Right ventricle myocardium superior (tissue), 1 donor: ENCODE measurements at regions of chr12 and their contacts with region 1.

Region 1: DNA sequence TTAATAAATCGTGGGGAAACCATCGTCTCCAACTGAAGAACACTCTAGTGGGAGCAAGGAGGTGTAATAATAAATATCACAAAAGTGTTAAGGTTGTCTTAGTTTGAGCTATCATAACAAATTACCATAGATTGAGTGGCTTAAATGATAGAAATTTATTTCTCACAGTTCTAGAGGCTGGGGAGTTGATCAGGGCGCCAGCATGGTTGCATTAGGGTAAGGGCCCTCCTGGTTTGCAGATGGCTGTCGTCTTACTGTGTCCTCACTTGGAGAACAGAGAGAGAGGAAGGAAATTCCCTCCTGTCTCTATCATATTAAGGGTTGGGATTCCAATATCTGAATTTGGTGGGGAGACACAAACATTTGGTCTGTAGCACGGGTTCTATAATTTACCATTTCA is 33.0 kb downstream of the MRPS35 start:
- DNase-seq: no peak
- ATAC-seq: no peak

Region 2: GRCh38 chr12:27821259-27821973 is 77.8 kb after region 1 on chr12:
- intact Hi-C with region 1: loop called (anchors 5 kb)
- DNase-seq: no peak
- ATAC-seq: peak; percentile 80